ENCODE measurements at regions of chr15 and their contacts with region 1.

Region 1: DNA sequence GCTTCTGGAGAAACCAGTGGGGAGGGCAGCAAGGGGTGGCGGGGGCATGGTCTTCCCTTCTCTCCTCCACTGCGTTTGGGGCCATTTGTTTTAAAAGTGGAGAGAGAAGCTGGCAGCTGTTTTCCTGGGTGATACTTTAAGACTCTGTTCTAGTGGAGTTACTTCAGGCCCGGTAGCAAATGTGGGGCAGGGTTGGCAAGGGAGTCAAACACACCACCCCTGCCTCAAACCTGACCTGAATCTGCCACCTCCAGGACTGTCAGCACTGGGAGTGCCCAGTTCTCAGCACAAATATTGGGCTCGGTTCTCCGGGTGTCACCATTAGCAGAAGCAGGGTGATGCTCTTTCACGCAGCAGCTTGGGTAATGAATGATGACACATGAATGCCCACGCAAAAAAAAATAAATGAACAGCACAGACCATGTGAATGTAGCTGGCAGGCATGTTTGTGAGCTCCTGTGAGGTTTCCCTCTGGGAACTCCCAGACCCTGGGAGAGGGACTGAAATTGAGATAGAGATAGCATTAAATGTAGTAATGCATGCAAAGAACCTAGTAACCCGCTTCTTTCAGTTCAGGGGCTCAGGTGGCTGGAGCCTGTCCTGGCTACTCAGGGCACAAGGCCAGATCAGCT is 424.0 kb downstream of the MCTP2 start:
- DNase-seq: no peak
- H3K4me3 ChIP-seq: no peak overlapping the region
- H3K27ac ChIP-seq: no peak overlapping the region
- H3K4me1 ChIP-seq: no peaks in the 10 kb centered on the region
- H3K27me3 ChIP-seq: peaks cover 47% of the 10 kb centered on the region
- CTCF ChIP-seq: no peak

Region 2: DNA sequence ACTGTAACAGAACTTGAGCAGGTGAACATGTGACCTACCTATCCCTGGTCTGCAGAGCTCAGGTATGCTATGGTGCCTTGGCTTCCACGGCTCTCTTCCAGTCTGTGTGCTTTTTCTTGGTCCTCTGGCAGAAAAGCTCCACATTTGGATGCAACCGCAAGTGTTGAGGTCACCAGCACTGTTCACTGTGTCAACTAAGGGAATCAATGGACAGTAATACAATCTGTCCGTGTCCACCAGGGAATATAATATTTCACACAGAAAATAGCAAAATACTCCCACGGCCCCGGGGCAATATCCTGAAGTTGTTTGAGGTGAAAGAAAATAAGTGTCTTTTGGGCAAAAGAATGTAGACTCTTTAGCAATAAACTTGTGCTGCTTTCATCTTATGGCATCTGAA is 72.8 kb after region 1 on chr15:
- CTCF ChIA-PET with region 1: no interaction called
- POLR2A ChIA-PET with region 1: interaction called, 10 read pairs
- intact Hi-C with region 1: no loop called
- DNase-seq: no peak
- H3K4me3 ChIP-seq: no peak overlapping the region
- H3K27ac ChIP-seq: no peak overlapping the region
- H3K4me1 ChIP-seq: no peaks in the 10 kb centered on the region
- H3K27me3 ChIP-seq: peaks cover 17% of the 10 kb centered on the region
- CTCF ChIP-seq: no peak